Colonic mucosa (tissue), 4 donors: ENCODE measurements at regions of chr15 and their contacts with region 1.

Region 1: DNA sequence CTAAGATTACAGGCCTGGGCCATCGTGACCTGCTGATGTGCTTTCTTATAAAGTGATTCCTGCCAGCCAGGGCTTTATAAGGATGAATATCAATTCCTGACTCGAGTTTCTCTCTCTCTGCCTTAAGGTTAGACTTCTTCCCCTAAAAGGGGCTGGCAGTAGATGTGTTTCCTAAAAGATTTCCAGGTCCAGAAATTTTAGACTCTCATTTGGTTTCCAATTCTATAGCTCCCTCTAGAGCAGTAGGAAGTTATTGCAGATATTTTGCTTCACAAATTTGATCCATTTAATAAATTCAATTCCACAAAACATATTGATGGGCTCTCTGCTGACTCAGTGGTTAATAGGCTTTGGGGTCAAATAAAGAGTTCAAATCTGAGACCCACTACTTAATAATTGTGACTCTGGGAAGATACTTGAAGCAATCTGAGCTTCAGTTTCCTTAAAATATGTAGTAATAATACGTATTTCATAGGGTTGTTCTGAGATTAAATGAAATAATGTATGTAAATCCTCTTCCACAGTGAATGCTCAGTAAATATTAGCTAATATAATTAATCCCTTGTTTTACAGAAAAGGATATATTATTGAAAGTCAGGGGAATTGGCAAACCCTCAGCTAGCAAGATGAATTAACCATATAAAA is 2.1 kb downstream of the TRIM69 start:
- DNase-seq: no peak
- H3K4me3 ChIP-seq: no peak overlapping the region
- H3K27ac ChIP-seq: no peak overlapping the region
- H3K4me1 ChIP-seq: no peaks in the 10 kb centered on the region
- H3K27me3 ChIP-seq: no peaks in the 10 kb centered on the region
- CTCF ChIP-seq: peak; percentile 58

Region 2: DNA sequence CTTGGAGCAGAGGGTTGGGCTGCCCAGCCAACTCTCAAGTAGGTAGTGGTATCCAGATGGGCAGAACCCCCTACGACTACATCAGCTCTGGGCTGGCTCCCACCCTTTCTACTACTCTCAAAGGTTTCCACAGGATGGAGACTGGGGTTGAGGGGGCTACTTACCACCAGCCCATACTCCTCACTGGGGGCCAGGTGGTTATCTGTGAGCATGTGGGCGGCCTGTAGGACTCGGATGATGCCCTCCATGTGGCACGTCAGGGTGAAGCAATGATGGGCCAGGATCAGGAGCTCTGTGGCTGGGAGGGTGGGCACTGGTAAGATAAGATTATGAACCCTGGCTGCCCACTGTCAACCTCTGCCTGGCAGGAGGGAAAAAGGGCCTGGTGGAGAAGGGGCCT is 168.1 kb before region 1 on chr15:
- intact Hi-C with region 1: loop called (anchors 10 kb)
- DNase-seq: no peak
- H3K4me3 ChIP-seq: no peak overlapping the region
- H3K27ac ChIP-seq: no peak overlapping the region
- H3K4me1 ChIP-seq: no peaks in the 10 kb centered on the region
- H3K27me3 ChIP-seq: no peaks in the 10 kb centered on the region
- CTCF ChIP-seq: no peak

Region 3: DNA sequence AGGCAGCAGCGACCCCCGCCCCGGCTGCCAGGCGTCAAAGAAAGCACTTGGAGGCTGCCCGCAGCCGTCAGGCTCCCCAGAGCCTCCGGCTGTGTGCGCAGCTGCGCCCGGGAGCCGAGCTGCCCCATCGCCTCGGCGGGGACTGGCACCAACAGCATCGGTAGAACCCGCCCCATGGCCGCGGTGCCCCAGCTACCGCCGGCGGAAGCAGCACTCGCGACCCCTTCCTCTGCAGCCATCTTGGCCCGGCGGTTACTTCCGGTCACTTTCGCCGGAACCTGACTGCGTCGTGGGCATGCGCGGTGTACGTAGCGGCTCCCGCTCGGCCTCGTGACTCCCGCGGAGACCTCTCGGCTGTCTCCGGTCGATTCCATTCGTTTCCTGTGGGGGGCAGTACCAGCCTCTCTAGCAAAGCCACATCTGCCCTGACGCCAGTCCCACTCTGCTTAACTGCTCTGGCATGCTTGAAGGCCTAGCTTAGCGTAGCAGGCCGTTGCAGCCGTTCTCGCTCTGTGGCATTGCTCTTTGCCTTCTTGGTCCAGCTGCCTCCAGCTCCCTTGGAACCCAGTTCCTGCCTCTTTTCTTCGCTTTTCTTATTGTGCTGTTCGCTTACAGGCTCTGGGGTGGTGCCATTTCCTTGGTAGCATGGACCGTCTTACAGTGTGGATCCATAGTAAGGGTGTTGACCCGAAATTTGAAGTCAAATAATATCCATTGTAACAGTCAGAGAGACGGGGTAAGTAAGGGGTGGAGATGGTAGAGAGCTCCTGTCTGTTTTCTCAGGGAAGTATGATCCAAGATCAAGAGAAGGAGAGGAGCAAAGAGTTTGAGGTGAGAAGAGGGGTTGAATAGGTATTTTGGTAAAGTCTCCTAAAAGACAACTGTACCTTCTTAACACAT is 74.8 kb before region 1 on chr15 and contains the start of gene SPG11:
- intact Hi-C with region 1: loop called (anchors 2 kb)
- DNase-seq: peak; percentile 99
- H3K4me3 ChIP-seq: peak within 1 kb of the TSS; percentile 81
- H3K27ac ChIP-seq: peak within 1 kb of the TSS; percentile 98
- H3K4me1 ChIP-seq: peaks cover 13% of the 10 kb centered on the region
- H3K27me3 ChIP-seq: no peaks in the 10 kb centered on the region
- CTCF ChIP-seq: peak; percentile 96
- total RNA-seq, gene SPG11: 79.3 to 95.3 TPM